CD8-positive, alpha-beta T cell (primary cell): ENCODE measurements at regions of chr20 and their contacts with region 1.

Region 1: DNA sequence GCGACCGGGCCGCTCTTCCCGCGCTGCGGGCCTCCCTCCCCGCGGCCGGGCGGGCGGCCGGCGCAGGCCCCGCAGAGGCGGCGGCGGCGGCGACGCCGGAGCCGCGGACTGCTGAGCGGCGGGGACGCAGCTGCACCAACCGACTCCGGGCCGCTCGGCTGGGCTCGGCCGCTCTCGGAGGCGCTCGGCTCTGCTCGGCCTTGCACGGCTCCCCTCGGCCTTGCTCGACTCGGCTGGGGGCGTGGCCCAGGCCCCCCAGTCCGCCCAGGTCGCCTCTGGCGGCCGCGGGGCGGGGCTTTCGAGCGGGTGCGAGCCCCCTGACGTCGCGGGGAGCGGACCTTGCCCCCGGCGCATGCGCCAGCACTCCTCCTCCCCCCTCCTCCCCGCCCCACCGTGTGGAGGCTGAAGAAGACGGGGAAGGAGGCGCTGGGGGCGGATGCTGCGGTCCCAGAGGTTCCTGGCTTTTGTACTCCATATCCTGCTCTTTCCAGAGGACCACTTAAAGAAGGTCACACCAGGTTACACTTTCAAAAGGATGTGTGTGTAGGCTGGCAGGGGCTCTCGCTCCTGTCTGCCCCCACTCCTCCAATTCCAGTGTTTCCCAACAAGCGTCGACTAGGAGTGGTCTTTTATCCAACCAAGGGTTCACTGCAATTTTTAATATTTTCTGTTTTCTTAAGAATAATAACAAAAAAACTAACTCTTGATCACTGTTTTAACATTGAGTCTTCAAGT is at the start of gene ZHX3:
- DNase-seq: peak; percentile 93 to 99 (median 97)
- ATAC-seq: peak; percentile 95
- H3K4me3 ChIP-seq: peak within 1 kb of the TSS; percentile 67 to 85
- H3K4me3 Mint-ChIP-seq: peak within 1 kb of the TSS; percentile 80
- H3K27ac ChIP-seq: peak within 1 kb of the TSS; percentile 47 to 57
- H3K27ac Mint-ChIP-seq: peak within 1 kb of the TSS; percentile 57
- H3K4me1 ChIP-seq: peaks cover 11% of the 10 kb centered on the region
- H3K4me1 Mint-ChIP-seq: peaks cover 28% of the 10 kb centered on the region
- H3K27me3 ChIP-seq: no peaks in the 10 kb centered on the region
- H3K27me3 Mint-ChIP-seq: no peaks in the 10 kb centered on the region
- CTCF ChIP-seq: no peak
- total RNA-seq, gene ZHX3: 4.4 to 4.7 TPM

Region 2: GRCh38 chr20:41249406-41250281 is 68.1 kb before region 1 on chr20:
- CTCF ChIA-PET with region 1: no interaction called
- POLR2A ChIA-PET with region 1: no interaction called
- intact Hi-C with region 1: loop called in 1 of 2 experiments (anchors 5 kb)
- DNase-seq: peak in 1 of 9 experiments; percentile 12
- ATAC-seq: no peak
- H3K4me3 ChIP-seq: no peak overlapping the region
- H3K4me3 Mint-ChIP-seq: no peak overlapping the region
- H3K27ac ChIP-seq: no peak overlapping the region
- H3K27ac Mint-ChIP-seq: no peak overlapping the region
- H3K4me1 ChIP-seq: no peaks in the 10 kb centered on the region
- H3K4me1 Mint-ChIP-seq: no peaks in the 10 kb centered on the region
- H3K27me3 ChIP-seq: no peaks in the 10 kb centered on the region
- H3K27me3 Mint-ChIP-seq: no peaks in the 10 kb centered on the region
- CTCF ChIP-seq: no peak

Region 3: GRCh38 chr20:41693136-41693979 is 375.7 kb after region 1 on chr20:
- CTCF ChIA-PET with region 1: no interaction called
- POLR2A ChIA-PET with region 1: no interaction called
- intact Hi-C with region 1: loop called (anchors 2 to 5 kb)
- DNase-seq: peak; percentile 60 to 94 (median 80)
- ATAC-seq: peak; percentile 86
- H3K4me3 ChIP-seq: peak overlapping the region; percentile 92 to 97
- H3K4me3 Mint-ChIP-seq: peak overlapping the region; percentile 87
- H3K27ac ChIP-seq: peak overlapping the region; percentile 86 to 91
- H3K27ac Mint-ChIP-seq: peak overlapping the region; percentile 93
- H3K4me1 ChIP-seq: peaks cover 10% of the 10 kb centered on the region
- H3K4me1 Mint-ChIP-seq: peaks cover 18% of the 10 kb centered on the region
- H3K27me3 ChIP-seq: no peaks in the 10 kb centered on the region
- H3K27me3 Mint-ChIP-seq: peaks cover 4% of the 10 kb centered on the region
- CTCF ChIP-seq: peak; percentile 40